ENCODE measurements at regions of chr7 and their contacts with region 1.

Region 1: DNA sequence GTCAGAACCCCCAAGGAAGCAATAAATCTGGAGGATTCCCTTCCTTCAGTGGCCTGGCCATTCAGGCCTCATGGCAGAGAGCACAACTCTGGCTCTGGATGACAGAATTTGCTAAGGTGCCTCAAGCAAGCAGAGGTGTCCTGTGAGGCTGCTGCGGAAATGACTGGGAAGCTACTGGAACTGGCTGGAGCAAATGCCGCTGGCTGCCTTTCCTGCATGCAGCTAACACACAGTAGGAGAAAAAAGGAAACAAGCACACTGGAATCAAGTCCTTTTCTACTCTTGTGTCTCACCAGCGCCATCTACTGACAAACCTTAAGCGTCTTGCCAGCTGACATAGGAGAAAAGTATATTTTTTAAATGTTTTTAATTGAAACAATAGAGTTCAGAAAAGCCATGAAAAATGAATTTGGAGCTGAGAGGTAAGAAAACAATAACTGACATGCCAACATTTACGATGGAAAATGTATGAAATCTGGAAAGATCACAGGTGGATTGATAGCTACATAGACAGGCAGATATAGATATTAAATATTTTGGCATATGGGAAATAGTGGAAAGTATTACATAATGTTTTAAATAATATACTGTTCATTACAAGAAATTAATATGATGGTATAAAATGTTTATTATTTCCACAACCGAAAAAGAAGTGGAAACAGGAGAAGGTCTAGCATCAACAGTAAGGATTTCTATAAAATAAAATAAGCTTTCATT is 951.6 kb downstream of the ANKRD7 start:
- DNase-seq: peak; percentile 73 to 76
- H3K4me3 ChIP-seq: no peak overlapping the region
- H3K4me3 Mint-ChIP-seq: no peak overlapping the region
- H3K27ac Mint-ChIP-seq: no peak overlapping the region
- H3K4me1 ChIP-seq: no peaks in the 10 kb centered on the region
- H3K4me1 Mint-ChIP-seq: peaks cover 5% of the 10 kb centered on the region
- H3K27me3 ChIP-seq: no peaks in the 10 kb centered on the region
- H3K27me3 Mint-ChIP-seq: no peaks in the 10 kb centered on the region
- CTCF ChIP-seq: peak; percentile 81 to 83

Region 2: GRCh38 chr7:118870187-118870586 is 305.9 kb before region 1 on chr7:
- CTCF ChIA-PET with region 1: interaction called, 3 read pairs
- POLR2A ChIA-PET with region 1: no interaction called
- intact Hi-C with region 1: loop called (anchors 1 kb)
- DNase-seq: peak in 1 of 2 experiments; percentile 25
- H3K4me3 ChIP-seq: no peak overlapping the region
- H3K4me3 Mint-ChIP-seq: no peak overlapping the region
- H3K27ac Mint-ChIP-seq: no peak overlapping the region
- H3K4me1 ChIP-seq: no peaks in the 10 kb centered on the region
- H3K4me1 Mint-ChIP-seq: no peaks in the 10 kb centered on the region
- H3K27me3 ChIP-seq: no peaks in the 10 kb centered on the region
- H3K27me3 Mint-ChIP-seq: no peaks in the 10 kb centered on the region
- CTCF ChIP-seq: peak; percentile 37 to 48

Region 3: GRCh38 chr7:118918556-118918955 is 257.5 kb before region 1 on chr7:
- CTCF ChIA-PET with region 1: interaction called, 3 read pairs
- POLR2A ChIA-PET with region 1: no interaction called
- intact Hi-C with region 1: loop called (anchors 1 kb)
- DNase-seq: peak in 1 of 2 experiments; percentile 3
- H3K4me3 ChIP-seq: no peak overlapping the region
- H3K4me3 Mint-ChIP-seq: no peak overlapping the region
- H3K27ac Mint-ChIP-seq: no peak overlapping the region
- H3K4me1 ChIP-seq: no peaks in the 10 kb centered on the region
- H3K4me1 Mint-ChIP-seq: no peaks in the 10 kb centered on the region
- H3K27me3 ChIP-seq: no peaks in the 10 kb centered on the region
- H3K27me3 Mint-ChIP-seq: no peaks in the 10 kb centered on the region
- CTCF ChIP-seq: peak in 1 of 2 experiments; percentile 20

Region 4: GRCh38 chr7:119105381-119105780 is 70.7 kb before region 1 on chr7:
- CTCF ChIA-PET with region 1: no interaction called
- POLR2A ChIA-PET with region 1: no interaction called
- intact Hi-C with region 1: loop called (anchors 2 kb)
- DNase-seq: no peak
- H3K4me3 ChIP-seq: no peak overlapping the region
- H3K4me3 Mint-ChIP-seq: peak overlapping the region; percentile 40
- H3K27ac Mint-ChIP-seq: peak overlapping the region; percentile 44
- H3K4me1 ChIP-seq: peaks cover 46% of the 10 kb centered on the region
- H3K4me1 Mint-ChIP-seq: peaks cover 31% of the 10 kb centered on the region
- H3K27me3 ChIP-seq: no peaks in the 10 kb centered on the region
- H3K27me3 Mint-ChIP-seq: no peaks in the 10 kb centered on the region
- CTCF ChIP-seq: no peak

Region 5: GRCh38 chr7:119197877-119198527 is 21.9 kb after region 1 on chr7:
- CTCF ChIA-PET with region 1: interaction called, 3 read pairs
- POLR2A ChIA-PET with region 1: no interaction called
- intact Hi-C with region 1: loop called (anchors 1 kb)
- DNase-seq: peak; percentile 57 to 65
- H3K4me3 ChIP-seq: no peak overlapping the region
- H3K4me3 Mint-ChIP-seq: no peak overlapping the region
- H3K27ac Mint-ChIP-seq: no peak overlapping the region
- H3K4me1 ChIP-seq: no peaks in the 10 kb centered on the region
- H3K4me1 Mint-ChIP-seq: no peaks in the 10 kb centered on the region
- H3K27me3 ChIP-seq: no peaks in the 10 kb centered on the region
- H3K27me3 Mint-ChIP-seq: no peaks in the 10 kb centered on the region
- CTCF ChIP-seq: peak; percentile 81 to 87